HepG2 (cell line): ENCODE measurements at regions of chr1 and their contacts with region 1.

Region 1: DNA sequence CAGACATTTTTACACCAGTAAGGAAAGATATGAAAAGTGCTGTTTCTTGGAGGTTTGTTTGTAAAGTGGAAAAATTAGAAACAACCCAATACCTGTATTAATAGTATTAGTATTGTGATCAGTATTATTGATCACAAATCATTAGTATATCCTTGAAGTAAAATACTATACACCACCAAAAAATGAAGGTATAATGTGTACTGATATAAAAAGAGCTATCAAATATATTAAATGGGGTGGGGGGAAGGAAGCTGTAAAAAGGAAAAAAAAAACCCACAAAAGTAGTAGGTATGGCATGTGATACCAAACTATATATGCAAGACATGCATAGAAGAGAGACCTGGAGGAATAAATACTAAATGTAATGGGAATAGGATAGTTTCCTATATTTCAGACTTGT is 46.3 kb downstream of the POU2F1 start:
- DNase-seq: no peak
- ATAC-seq: no peak
- H3K4me3 ChIP-seq: no peak overlapping the region
- H3K27ac ChIP-seq: no peak overlapping the region
- H3K4me1 ChIP-seq: peaks cover 18% of the 10 kb centered on the region
- H3K27me3 ChIP-seq: no peaks in the 10 kb centered on the region
- CTCF ChIP-seq: no peak
- EP300 ChIP-seq: no peak
- POLR2A ChIP-seq: no peak
- RAD21 ChIP-seq: no peak

Region 2: DNA sequence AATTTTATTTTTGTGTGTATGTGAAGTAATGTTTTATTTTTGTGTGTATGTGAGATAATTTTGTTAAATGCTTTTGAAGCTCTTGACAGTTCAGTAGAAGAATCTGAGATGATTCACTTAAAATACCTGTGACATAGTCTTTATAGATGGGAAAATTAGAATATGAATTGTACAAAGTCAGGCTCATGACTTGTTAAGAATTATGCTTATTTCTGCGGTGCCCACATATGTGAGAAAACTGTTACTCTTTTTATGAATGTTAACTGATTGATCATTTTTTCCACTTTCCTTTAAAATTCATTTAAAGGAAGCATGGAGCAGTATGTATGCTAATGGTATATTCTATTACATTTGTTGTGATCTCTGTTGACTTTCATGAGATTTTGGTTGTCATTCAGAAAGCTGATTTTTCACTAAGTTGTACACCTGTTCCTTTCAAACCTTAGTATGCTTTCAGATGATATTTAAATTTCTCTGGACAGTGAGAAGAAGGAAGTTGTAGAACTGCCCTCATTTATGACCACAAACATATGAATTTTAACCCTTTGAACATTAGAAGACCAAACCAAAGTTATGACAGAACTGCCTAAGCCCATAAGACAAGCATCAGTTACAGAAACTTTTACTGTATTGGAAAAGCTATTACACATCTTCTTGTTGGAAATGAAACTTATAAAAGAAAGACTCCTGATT is 63.8 kb after region 1 on chr1:
- CTCF ChIA-PET with region 1: no interaction called
- POLR2A ChIA-PET with region 1: no interaction called
- in situ Hi-C with region 1: no loop called
- intact Hi-C with region 1: no loop called
- DNase-seq: no peak
- ATAC-seq: no peak
- H3K4me3 ChIP-seq: no peak overlapping the region; a peak in 2 of 6 replicates
- H3K27ac ChIP-seq: no peak overlapping the region
- H3K4me1 ChIP-seq: peaks cover 49% of the 10 kb centered on the region
- H3K27me3 ChIP-seq: no peaks in the 10 kb centered on the region
- CTCF ChIP-seq: no peak
- EP300 ChIP-seq: no peak
- POLR2A ChIP-seq: no peak
- RAD21 ChIP-seq: no peak

Region 3: GRCh38 chr1:167409183-167409582 is 142.2 kb after region 1 on chr1:
- CTCF ChIA-PET with region 1: interaction called, 10 read pairs
- POLR2A ChIA-PET with region 1: no interaction called
- in situ Hi-C with region 1: loop called (anchors 5 kb)
- intact Hi-C with region 1: loop called (anchors 1 kb)
- DNase-seq: peak; percentile 24
- ATAC-seq: peak; percentile 86
- H3K4me3 ChIP-seq: no peak overlapping the region
- H3K27ac ChIP-seq: no peak overlapping the region
- H3K4me1 ChIP-seq: no peaks in the 10 kb centered on the region
- H3K27me3 ChIP-seq: no peaks in the 10 kb centered on the region
- CTCF ChIP-seq: peak; percentile 48
- EP300 ChIP-seq: no peak
- POLR2A ChIP-seq: no peak
- RAD21 ChIP-seq: no peak